ENCODE measurements at regions of chr4 and their contacts with region 1.

Region 1: DNA sequence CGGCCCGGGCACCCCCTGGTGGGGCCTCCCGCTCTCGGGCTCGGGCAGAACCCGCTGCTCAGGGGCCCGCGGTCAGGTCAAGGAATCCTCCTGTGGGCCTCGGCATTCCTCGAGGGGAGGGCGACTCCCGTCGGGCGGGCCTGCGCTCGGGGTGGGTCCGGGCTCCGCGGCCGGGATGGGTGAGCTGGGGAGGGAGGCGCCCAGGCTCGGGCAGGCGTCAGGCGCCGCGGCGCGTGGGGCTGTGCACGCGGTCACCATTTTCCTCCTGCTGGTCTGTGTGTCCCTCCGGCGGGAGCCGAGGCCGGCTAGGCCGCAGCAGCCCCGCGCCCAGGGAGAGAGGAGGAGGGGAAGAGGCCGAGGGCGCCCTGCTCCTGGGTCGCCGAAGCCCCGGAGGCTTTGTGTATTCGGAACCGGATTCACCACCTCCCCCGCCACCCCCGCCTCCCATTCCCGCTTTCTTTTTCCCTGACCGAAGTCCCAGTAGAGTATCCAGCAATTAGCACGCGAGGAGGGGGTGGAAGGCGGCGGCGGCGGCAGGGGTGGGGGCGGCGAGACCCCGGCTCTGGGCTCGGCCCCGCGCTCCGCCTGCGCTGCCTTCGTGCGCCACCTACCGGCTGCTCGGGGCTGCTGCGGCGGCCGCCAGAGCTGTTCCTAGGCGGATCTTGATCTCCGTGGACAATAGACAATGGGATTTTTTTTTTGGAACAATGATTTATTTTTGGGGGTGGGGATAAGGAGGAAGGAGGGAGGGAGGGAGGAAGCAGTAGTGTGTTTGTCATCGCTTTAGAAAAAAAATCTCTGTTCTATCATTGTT is 99.0 kb upstream of the MAML3 start:
- DNase-seq: peak; percentile 65
- H3K4me3 Mint-ChIP-seq: peak overlapping the region; percentile 61
- H3K27ac Mint-ChIP-seq: no peak overlapping the region
- H3K4me1 Mint-ChIP-seq: peaks cover 10% of the 10 kb centered on the region
- H3K27me3 Mint-ChIP-seq: peaks cover 35% of the 10 kb centered on the region

Region 2: DNA sequence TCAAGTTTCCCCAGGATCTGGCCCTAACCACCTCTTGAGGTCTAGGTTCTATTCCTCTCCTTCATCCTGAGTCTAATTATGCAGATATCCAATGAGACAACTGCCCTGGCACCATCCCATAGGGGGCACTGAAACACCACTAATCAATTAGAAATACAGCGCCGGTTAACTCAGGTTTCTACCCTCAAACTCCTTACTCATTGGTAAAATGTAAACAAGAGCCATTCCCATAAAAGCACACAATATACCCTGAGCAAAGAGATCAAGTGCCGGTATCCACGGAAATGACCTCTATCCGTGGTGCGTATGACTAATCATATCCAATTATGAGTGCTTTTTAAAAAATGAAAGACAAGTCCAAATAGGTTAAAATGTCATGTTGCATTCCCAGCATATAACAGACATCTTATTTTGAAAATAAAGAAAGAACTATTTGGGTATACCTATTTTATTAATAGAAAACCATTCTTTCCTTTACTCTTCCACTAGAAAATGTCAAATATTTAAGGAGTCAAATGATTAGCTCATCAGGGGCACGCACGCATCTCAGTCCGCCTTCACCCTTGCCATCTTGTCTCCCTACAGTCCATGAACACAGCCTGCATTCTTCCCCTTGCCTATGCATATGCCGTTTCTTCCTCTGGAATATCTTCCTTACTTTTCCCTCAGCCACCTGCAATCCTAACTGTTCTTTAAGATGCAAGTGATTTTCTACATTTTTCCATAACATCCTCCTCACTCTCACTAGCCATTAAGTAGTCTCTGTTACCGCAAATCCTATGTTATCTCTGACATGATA is 240.1 kb before region 1 on chr4:
- CTCF ChIA-PET with region 1: interaction called, 19 read pairs
- DNase-seq: peak; percentile 73
- H3K4me3 Mint-ChIP-seq: no peak overlapping the region
- H3K27ac Mint-ChIP-seq: no peak overlapping the region
- H3K4me1 Mint-ChIP-seq: peaks cover 6% of the 10 kb centered on the region
- H3K27me3 Mint-ChIP-seq: peaks cover 9% of the 10 kb centered on the region

Region 3: GRCh38 chr4:140237606-140237986 is 15.4 kb before region 1 on chr4:
- CTCF ChIA-PET with region 1: interaction called, 14 read pairs
- DNase-seq: no peak
- H3K4me3 Mint-ChIP-seq: no peak overlapping the region
- H3K27ac Mint-ChIP-seq: no peak overlapping the region
- H3K4me1 Mint-ChIP-seq: peaks cover 30% of the 10 kb centered on the region
- H3K27me3 Mint-ChIP-seq: peaks cover 23% of the 10 kb centered on the region

Region 4: DNA sequence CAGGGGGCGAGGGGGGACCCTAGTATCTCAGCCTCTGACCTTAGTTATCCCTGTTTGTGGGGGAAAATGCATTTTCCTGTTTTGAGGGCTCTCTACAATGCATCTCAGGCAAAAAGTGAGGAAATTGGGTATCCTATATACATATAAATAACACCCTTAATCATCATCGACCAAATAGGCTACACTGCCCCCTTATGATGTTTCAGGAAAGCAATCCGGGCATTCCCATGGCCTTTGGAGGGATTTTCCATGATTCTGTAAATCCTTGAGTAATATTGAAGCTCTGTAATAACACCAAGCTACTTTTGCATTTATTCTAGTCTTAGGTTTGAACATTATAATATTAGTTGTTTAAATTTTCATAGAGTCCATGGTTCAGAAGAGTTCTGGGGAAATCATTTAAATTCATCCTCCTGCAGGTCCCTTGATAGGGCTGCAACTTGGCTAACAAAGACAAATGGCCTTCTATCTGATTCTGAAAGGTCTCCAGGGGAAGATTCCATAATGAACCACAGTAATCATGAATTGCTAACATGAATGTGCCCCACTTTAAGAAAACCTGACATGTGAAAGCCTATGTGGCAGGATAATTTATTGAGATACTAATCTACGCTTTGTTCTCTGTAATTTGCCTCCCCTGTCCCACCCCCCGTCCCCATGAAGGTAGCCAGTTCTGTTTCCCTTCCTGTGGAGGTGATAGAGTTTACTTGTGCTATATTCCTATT is 29.0 kb after region 1 on chr4:
- CTCF ChIA-PET with region 1: no interaction called
- DNase-seq: no peak
- H3K4me3 Mint-ChIP-seq: no peak overlapping the region
- H3K27ac Mint-ChIP-seq: no peak overlapping the region
- H3K4me1 Mint-ChIP-seq: no peaks in the 10 kb centered on the region
- H3K27me3 Mint-ChIP-seq: peaks cover 3% of the 10 kb centered on the region